ENCODE measurements at regions of chr2 and their contacts with region 1.

Region 1: GRCh38 chr2:46776687-46777327 is 138.8 kb downstream of the MCFD2 start:
- DNase-seq: no peak
- ATAC-seq: no peak
- H3K4me3 Mint-ChIP-seq: no peak overlapping the region
- H3K27ac Mint-ChIP-seq: no peak overlapping the region
- H3K4me1 Mint-ChIP-seq: peaks cover 3% of the 10 kb centered on the region
- H3K27me3 Mint-ChIP-seq: peaks cover 6% of the 10 kb centered on the region
- CTCF ChIP-seq: no peak

Region 2: GRCh38 chr2:46632349-46632748 is 144.5 kb before region 1 on chr2:
- CTCF ChIA-PET with region 1: interaction called, 4 read pairs
- POLR2A ChIA-PET with region 1: no interaction called
- intact Hi-C with region 1: loop called (anchors 1 kb)
- DNase-seq: no peak
- ATAC-seq: no peak
- H3K4me3 Mint-ChIP-seq: no peak overlapping the region
- H3K27ac Mint-ChIP-seq: no peak overlapping the region
- H3K4me1 Mint-ChIP-seq: peaks cover 7% of the 10 kb centered on the region
- H3K27me3 Mint-ChIP-seq: no peaks in the 10 kb centered on the region
- CTCF ChIP-seq: no peak

Region 3: GRCh38 chr2:46657042-46657504 is 119.7 kb before region 1 on chr2:
- CTCF ChIA-PET with region 1: interaction called, 34 read pairs
- POLR2A ChIA-PET with region 1: no interaction called
- intact Hi-C with region 1: loop called (anchors 1 kb)
- DNase-seq: no peak
- ATAC-seq: peak; percentile 66
- H3K4me3 Mint-ChIP-seq: no peak overlapping the region
- H3K27ac Mint-ChIP-seq: no peak overlapping the region
- H3K4me1 Mint-ChIP-seq: peaks cover 4% of the 10 kb centered on the region
- H3K27me3 Mint-ChIP-seq: no peaks in the 10 kb centered on the region
- CTCF ChIP-seq: no peak

Measured in activated B cell treated with CpG ODN at 0.5 μM for 24 hours (primary cell).